CD4-positive, alpha-beta memory T cell (primary cell): ENCODE measurements at regions of chr6 and their contacts with region 1.

Region 1: GRCh38 chr6:111210194-111210728 is 123.0 kb downstream of the SLC16A10 start:
- DNase-seq: peak in 4 of 5 donors; percentile 49 to 59 (median 50)
- H3K4me3 ChIP-seq: no peak overlapping the region
- H3K4me3 Mint-ChIP-seq: no peak overlapping the region
- H3K27ac ChIP-seq: no peak overlapping the region
- H3K27ac Mint-ChIP-seq: peak overlapping the region in 1 of 7 donors; percentile 15
- H3K4me1 ChIP-seq: no peaks in the 10 kb centered on the region
- H3K4me1 Mint-ChIP-seq: no peaks in the 10 kb centered on the region
- H3K27me3 ChIP-seq: no peaks in the 10 kb centered on the region
- H3K27me3 Mint-ChIP-seq: no peaks in the 10 kb centered on the region

Region 2: DNA sequence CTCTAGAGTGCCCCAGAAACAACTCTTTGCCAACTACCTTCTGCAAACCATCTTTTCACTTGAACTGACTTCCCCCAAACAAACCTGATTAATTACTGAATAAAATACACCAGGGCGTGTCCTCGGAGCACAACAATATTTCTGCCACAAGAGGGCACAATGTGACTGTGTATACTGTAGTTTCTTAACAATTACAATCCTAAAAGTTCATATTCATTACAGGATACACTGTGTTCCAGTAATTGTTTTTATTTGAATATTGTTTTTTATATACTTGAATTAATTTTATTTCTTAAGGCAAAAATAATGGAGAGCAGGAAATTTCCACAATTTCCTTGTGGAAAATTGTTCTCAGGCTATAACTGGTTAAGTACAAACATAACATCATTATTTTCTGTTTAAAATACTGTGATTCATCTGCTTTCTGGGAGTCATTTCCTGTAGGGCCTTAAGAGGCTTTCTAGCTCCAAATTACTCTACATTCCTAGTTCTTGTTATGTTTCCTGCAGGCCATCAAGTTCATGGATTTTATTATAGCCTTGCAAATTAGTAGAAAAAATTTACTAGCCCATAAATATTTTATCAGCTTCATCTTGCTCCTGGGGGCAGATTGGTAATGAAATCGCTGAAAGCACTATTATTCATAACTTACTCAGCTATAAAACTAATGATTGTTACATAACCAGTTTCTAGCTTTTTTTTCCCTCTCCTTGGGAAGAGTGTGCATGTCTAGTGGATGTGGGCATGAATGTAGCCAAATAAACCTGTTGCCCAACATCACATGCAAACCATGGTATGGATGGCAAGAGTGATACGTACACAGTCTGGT is 681.9 kb before region 1 on chr6:
- CTCF ChIA-PET with region 1: no interaction called
- POLR2A ChIA-PET with region 1: no interaction called
- intact Hi-C with region 1: loop called (anchors 1 kb)
- DNase-seq: peak in 4 of 5 donors; percentile 57 to 61 (median 60)
- H3K4me3 ChIP-seq: no peak overlapping the region
- H3K4me3 Mint-ChIP-seq: no peak overlapping the region
- H3K27ac ChIP-seq: no peak overlapping the region
- H3K27ac Mint-ChIP-seq: no peak overlapping the region
- H3K4me1 ChIP-seq: no peaks in the 10 kb centered on the region
- H3K4me1 Mint-ChIP-seq: peaks cover 0 to 7% (median 3%) of the 10 kb centered on the region in 4 donors
- H3K27me3 ChIP-seq: no peaks in the 10 kb centered on the region
- H3K27me3 Mint-ChIP-seq: no peaks in the 10 kb centered on the region

Region 3: GRCh38 chr6:111011360-111012142 is 198.7 kb before region 1 on chr6:
- CTCF ChIA-PET with region 1: interaction called, 64 read pairs
- POLR2A ChIA-PET with region 1: no interaction called
- intact Hi-C with region 1: loop called (anchors 1 kb)
- DNase-seq: peak in 4 of 5 donors; percentile 26 to 43 (median 35)
- H3K4me3 ChIP-seq: no peak overlapping the region
- H3K4me3 Mint-ChIP-seq: no peak overlapping the region
- H3K27ac ChIP-seq: no peak overlapping the region
- H3K27ac Mint-ChIP-seq: peak overlapping the region in 4 of 7 donors; percentile 0 to 17 (median 4)
- H3K4me1 ChIP-seq: no peaks in the 10 kb centered on the region
- H3K4me1 Mint-ChIP-seq: peaks cover 0 to 5% (median 4%) of the 10 kb centered on the region in 4 donors
- H3K27me3 ChIP-seq: no peaks in the 10 kb centered on the region
- H3K27me3 Mint-ChIP-seq: no peaks in the 10 kb centered on the region

Region 4: GRCh38 chr6:111057074-111057752 is 153.0 kb before region 1 on chr6:
- CTCF ChIA-PET with region 1: interaction called, 99 read pairs
- POLR2A ChIA-PET with region 1: interaction called, 3 read pairs
- intact Hi-C with region 1: loop called (anchors 1 kb)
- DNase-seq: peak in 4 of 5 donors; percentile 23 to 30 (median 27)
- H3K4me3 ChIP-seq: no peak overlapping the region
- H3K4me3 Mint-ChIP-seq: no peak overlapping the region
- H3K27ac ChIP-seq: no peak overlapping the region
- H3K27ac Mint-ChIP-seq: no peak overlapping the region
- H3K4me1 ChIP-seq: no peaks in the 10 kb centered on the region
- H3K4me1 Mint-ChIP-seq: peaks cover 0 to 5% (median 2%) of the 10 kb centered on the region in 4 donors
- H3K27me3 ChIP-seq: no peaks in the 10 kb centered on the region
- H3K27me3 Mint-ChIP-seq: no peaks in the 10 kb centered on the region

Region 5: GRCh38 chr6:111087106-111087835 is 123.0 kb before region 1 on chr6 and contains the start of gene SLC16A10:
- CTCF ChIA-PET with region 1: no interaction called
- POLR2A ChIA-PET with region 1: no interaction called
- intact Hi-C with region 1: loop called (anchors 1 kb)
- DNase-seq: peak; percentile 75 to 82 (median 79)
- H3K4me3 ChIP-seq: peak within 1 kb of the TSS; percentile 62 to 74
- H3K4me3 Mint-ChIP-seq: peak within 1 kb of the TSS; percentile 88 to 99 (median 93)
- H3K27ac ChIP-seq: peak within 1 kb of the TSS; percentile 47
- H3K27ac Mint-ChIP-seq: peak within 1 kb of the TSS; percentile 77 to 92 (median 90)
- H3K4me1 ChIP-seq: peaks cover 22% of the 10 kb centered on the region
- H3K4me1 Mint-ChIP-seq: peaks cover 21 to 37% (median 26%) of the 10 kb centered on the region in 4 donors
- H3K27me3 ChIP-seq: no peaks in the 10 kb centered on the region
- H3K27me3 Mint-ChIP-seq: peaks cover 7 to 15% of the 10 kb centered on the region in 2 donors
- total RNA-seq, gene SLC16A10: 9.8 to 11.2 TPM

Region 6: GRCh38 chr6:111171577-111172400 is 38.5 kb before region 1 on chr6:
- CTCF ChIA-PET with region 1: interaction called, 14 read pairs
- POLR2A ChIA-PET with region 1: no interaction called
- intact Hi-C with region 1: no loop called
- DNase-seq: no peak
- H3K4me3 ChIP-seq: no peak overlapping the region
- H3K4me3 Mint-ChIP-seq: no peak overlapping the region
- H3K27ac ChIP-seq: no peak overlapping the region
- H3K27ac Mint-ChIP-seq: no peak overlapping the region
- H3K4me1 ChIP-seq: peaks cover 24% of the 10 kb centered on the region
- H3K4me1 Mint-ChIP-seq: peaks cover 14 to 25% (median 16%) of the 10 kb centered on the region in 4 donors
- H3K27me3 ChIP-seq: no peaks in the 10 kb centered on the region
- H3K27me3 Mint-ChIP-seq: no peaks in the 10 kb centered on the region

Region 7: GRCh38 chr6:111220383-111221031 is 10.2 kb after region 1 on chr6:
- CTCF ChIA-PET with region 1: interaction called, 38 read pairs
- POLR2A ChIA-PET with region 1: no interaction called
- intact Hi-C with region 1: no loop called
- DNase-seq: no peak
- H3K4me3 ChIP-seq: no peak overlapping the region
- H3K4me3 Mint-ChIP-seq: no peak overlapping the region
- H3K27ac ChIP-seq: no peak overlapping the region
- H3K27ac Mint-ChIP-seq: peak overlapping the region in 1 of 7 donors; percentile 62
- H3K4me1 ChIP-seq: no peaks in the 10 kb centered on the region
- H3K4me1 Mint-ChIP-seq: no peaks in the 10 kb centered on the region
- H3K27me3 ChIP-seq: no peaks in the 10 kb centered on the region
- H3K27me3 Mint-ChIP-seq: peaks cover 0 to 2% of the 10 kb centered on the region in 2 donors